CD4-positive, alpha-beta T cell (primary cell): ENCODE measurements at regions of chr6 and their contacts with region 1.

Region 1: DNA sequence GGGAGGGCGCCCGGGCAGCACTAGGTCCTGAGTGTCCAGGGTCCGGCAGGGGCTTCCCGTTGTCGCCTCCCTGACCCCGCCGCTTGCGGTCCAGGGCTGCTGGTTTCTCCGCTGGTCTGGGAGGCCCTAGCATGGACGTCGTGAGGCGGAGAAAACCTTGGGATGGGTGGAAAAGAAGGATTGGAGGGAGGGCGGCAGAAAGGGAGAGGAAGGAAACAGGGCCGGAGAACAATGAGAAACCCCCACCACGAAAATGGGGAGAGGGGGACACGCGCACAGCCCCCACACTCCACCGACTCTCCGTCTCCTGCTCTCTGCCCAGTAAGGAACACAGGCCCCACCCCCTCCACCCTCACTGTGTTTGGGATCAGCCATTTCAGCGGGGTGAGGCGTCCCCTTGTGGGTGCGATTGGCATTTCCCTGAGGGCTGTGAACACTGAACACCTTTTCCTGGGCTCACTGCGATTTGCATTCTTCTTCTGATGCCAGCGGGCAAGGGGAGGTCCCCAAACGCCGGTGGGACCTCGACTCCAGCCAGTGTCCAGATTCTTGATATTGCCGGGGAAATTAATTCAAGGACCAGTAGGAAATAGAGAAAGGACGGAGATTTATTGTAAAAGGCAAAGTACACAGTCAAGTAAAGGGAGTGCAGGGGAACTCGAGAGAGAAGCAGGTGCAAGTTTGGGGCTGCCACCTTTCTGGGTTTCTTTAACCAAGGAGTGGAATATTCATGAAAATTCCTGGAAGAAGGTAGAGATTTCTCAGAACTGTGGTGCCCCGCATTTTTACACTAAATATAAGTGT is 3.3 kb upstream of the RAET1G start:
- DNase-seq: peak; percentile 48 to 81 (median 64)
- ATAC-seq: peak; percentile 66
- H3K4me3 ChIP-seq: peak overlapping the region; percentile 22
- H3K4me3 Mint-ChIP-seq: no peak overlapping the region
- H3K27ac ChIP-seq: no peak overlapping the region
- H3K27ac Mint-ChIP-seq: no peak overlapping the region
- H3K4me1 ChIP-seq: peaks cover 31% of the 10 kb centered on the region
- H3K4me1 Mint-ChIP-seq: peaks cover 27% of the 10 kb centered on the region
- H3K27me3 ChIP-seq: peaks cover 61 to 83% of the 10 kb centered on the region in 2 experiments
- H3K27me3 Mint-ChIP-seq: peaks cover 93% of the 10 kb centered on the region
- CTCF ChIP-seq: peak; percentile 60

Region 2: DNA sequence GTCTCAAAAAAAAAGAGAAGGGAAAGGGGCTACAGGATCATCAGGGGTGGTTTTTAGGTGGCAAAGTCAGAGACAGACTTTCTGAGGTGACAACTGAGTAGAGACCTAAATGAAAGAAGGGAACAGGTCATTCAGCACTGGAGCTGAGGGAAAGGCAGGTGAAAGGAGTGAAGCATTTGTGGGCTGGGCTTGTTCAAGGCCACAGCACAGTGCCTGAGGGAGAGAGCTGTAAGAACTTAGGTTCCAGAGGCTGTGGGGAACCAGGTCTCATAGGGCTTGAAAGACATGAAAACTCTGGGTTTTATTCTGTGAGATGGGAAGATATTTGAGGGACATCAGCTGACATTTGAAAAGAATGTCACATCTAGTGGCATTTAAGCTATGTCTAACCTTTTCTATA is 298.5 kb before region 1 on chr6:
- CTCF ChIA-PET with region 1: no interaction called
- POLR2A ChIA-PET with region 1: no interaction called
- intact Hi-C with region 1: no loop called
- DNase-seq: no peak
- ATAC-seq: no peak
- H3K4me3 ChIP-seq: no peak overlapping the region
- H3K4me3 Mint-ChIP-seq: no peak overlapping the region
- H3K27ac ChIP-seq: no peak overlapping the region
- H3K27ac Mint-ChIP-seq: peak overlapping the region; percentile 58
- H3K4me1 ChIP-seq: no peaks in the 10 kb centered on the region
- H3K4me1 Mint-ChIP-seq: peaks cover 5% of the 10 kb centered on the region
- H3K27me3 ChIP-seq: no peaks in the 10 kb centered on the region
- H3K27me3 Mint-ChIP-seq: no peaks in the 10 kb centered on the region
- CTCF ChIP-seq: no peak

Region 3: GRCh38 chr6:149723771-149724417 is 202.3 kb before region 1 on chr6:
- CTCF ChIA-PET with region 1: no interaction called
- POLR2A ChIA-PET with region 1: no interaction called
- intact Hi-C with region 1: loop called (anchors 10 kb)
- DNase-seq: peak in 11 of 14 experiments; percentile 16 to 78 (median 38)
- ATAC-seq: peak; percentile 92
- H3K4me3 ChIP-seq: no peak overlapping the region
- H3K4me3 Mint-ChIP-seq: no peak overlapping the region
- H3K27ac ChIP-seq: no peak overlapping the region
- H3K27ac Mint-ChIP-seq: peak overlapping the region; percentile 10
- H3K4me1 ChIP-seq: peaks cover 8% of the 10 kb centered on the region
- H3K4me1 Mint-ChIP-seq: peaks cover 25% of the 10 kb centered on the region
- H3K27me3 ChIP-seq: no peaks in the 10 kb centered on the region
- H3K27me3 Mint-ChIP-seq: no peaks in the 10 kb centered on the region
- CTCF ChIP-seq: peak; percentile 78

Region 4: GRCh38 chr6:149834513-149835481 is 91.4 kb before region 1 on chr6:
- CTCF ChIA-PET with region 1: interaction called, 6 read pairs
- POLR2A ChIA-PET with region 1: no interaction called
- intact Hi-C with region 1: loop called (anchors 1 kb)
- DNase-seq: peak; percentile 41 to 85 (median 71)
- ATAC-seq: peak; percentile 86
- H3K4me3 ChIP-seq: no peak overlapping the region
- H3K4me3 Mint-ChIP-seq: no peak overlapping the region
- H3K27ac ChIP-seq: no peak overlapping the region
- H3K27ac Mint-ChIP-seq: no peak overlapping the region
- H3K4me1 ChIP-seq: no peaks in the 10 kb centered on the region
- H3K4me1 Mint-ChIP-seq: peaks cover 5% of the 10 kb centered on the region
- H3K27me3 ChIP-seq: no peaks in the 10 kb centered on the region
- H3K27me3 Mint-ChIP-seq: no peaks in the 10 kb centered on the region
- CTCF ChIP-seq: peak; percentile 93